Activated B cell treated with CpG ODN at 0.5 μM for 24 hours (primary cell): ENCODE measurements at regions of chr12 and their contacts with region 1.

Region 1: DNA sequence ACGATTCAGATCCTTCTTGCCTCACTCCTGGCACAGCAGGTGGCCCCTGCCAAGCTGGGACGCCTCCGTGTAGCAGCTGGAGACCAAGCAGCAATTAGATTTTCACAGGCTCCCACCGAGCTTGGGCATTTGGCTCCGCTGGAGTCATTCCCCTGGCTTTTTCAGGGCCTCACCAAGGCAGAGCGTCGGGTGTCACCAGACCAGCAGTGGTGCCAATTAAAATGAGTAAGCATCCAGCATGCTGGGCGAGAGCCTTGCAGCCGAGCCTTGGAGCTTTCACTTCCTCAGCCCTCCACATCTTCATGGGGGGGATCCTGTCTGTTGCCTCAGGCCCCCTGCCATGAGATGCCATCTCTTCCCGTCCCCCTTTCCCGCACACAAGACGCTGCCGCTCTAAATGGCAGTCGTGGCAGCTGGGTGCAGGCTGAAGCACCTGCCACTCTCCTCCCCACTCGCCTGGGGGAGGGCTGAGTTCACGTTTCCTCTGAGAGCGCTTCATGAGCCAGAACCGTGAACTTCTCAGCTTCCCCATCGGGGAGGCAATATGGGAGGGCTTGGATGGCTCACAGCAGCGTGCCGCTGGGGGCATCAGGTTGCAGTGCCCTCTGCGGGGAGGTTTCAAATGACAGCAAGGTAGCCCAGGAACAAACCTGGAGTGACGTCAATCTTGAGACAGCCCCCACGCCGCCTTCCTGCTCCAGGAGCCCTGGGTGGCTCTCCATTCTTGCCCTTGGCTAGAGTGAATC is 11.7 kb downstream of the TPCN1 start:
- DNase-seq: peak; percentile 73
- ATAC-seq: peak; percentile 78
- H3K4me3 Mint-ChIP-seq: peak overlapping the region; percentile 76
- H3K27ac Mint-ChIP-seq: peak overlapping the region; percentile 95
- H3K4me1 Mint-ChIP-seq: peaks cover 87% of the 10 kb centered on the region
- H3K27me3 Mint-ChIP-seq: no peaks in the 10 kb centered on the region
- CTCF ChIP-seq: no peak

Region 2: GRCh38 chr12:113056631-113057488 is 176.2 kb before region 1 on chr12 and contains the start of gene DTX1:
- CTCF ChIA-PET with region 1: no interaction called
- POLR2A ChIA-PET with region 1: interaction called, 10 read pairs
- intact Hi-C with region 1: loop called (anchors 5 kb)
- DNase-seq: no peak
- ATAC-seq: peak; percentile 55
- H3K4me3 Mint-ChIP-seq: peak within 1 kb of the TSS; percentile 81
- H3K27ac Mint-ChIP-seq: peak within 1 kb of the TSS; percentile 78
- H3K4me1 Mint-ChIP-seq: peaks cover 46% of the 10 kb centered on the region
- H3K27me3 Mint-ChIP-seq: no peaks in the 10 kb centered on the region
- CTCF ChIP-seq: no peak
- total RNA-seq, gene DTX1: 75.3 and 79.4 TPM in 2 replicates

Region 3: GRCh38 chr12:113184900-113185773 is 47.9 kb before region 1 on chr12 and contains the starts of genes DDX54 and RITA1:
- CTCF ChIA-PET with region 1: interaction called, 7 read pairs
- POLR2A ChIA-PET with region 1: interaction called, 92 read pairs
- intact Hi-C with region 1: loop called (anchors 1 kb)
- DNase-seq: peak; percentile 87
- ATAC-seq: peak; percentile 83
- H3K4me3 Mint-ChIP-seq: peak within 1 kb of the TSS; percentile 93
- H3K27ac Mint-ChIP-seq: peak within 1 kb of the TSS; percentile 94
- H3K4me1 Mint-ChIP-seq: peaks cover 39% of the 10 kb centered on the region
- H3K27me3 Mint-ChIP-seq: no peaks in the 10 kb centered on the region
- CTCF ChIP-seq: no peak
- total RNA-seq, gene DDX54: 115 TPM in 2 replicates
- total RNA-seq, gene RITA1: 15.5 and 18.2 TPM in 2 replicates

Region 4: GRCh38 chr12:113221181-113221997 is 11.6 kb before region 1 on chr12 and contains the start of gene TPCN1:
- CTCF ChIA-PET with region 1: interaction called, 23 read pairs
- POLR2A ChIA-PET with region 1: interaction called, 267 read pairs
- intact Hi-C with region 1: loop called (anchors 1 kb)
- DNase-seq: peak; percentile 95
- ATAC-seq: peak; percentile 91
- H3K4me3 Mint-ChIP-seq: peak within 1 kb of the TSS; percentile 94
- H3K27ac Mint-ChIP-seq: peak within 1 kb of the TSS; percentile 94
- H3K4me1 Mint-ChIP-seq: peaks cover 45% of the 10 kb centered on the region
- H3K27me3 Mint-ChIP-seq: no peaks in the 10 kb centered on the region
- CTCF ChIP-seq: no peak
- total RNA-seq, gene TPCN1: 107 and 126 TPM in 2 replicates